Endothelial cell of umbilical vein (primary cell): ENCODE measurements at regions of chr3 and their contacts with region 1.

Region 1: GRCh38 chr3:197701841-197702240 is 34.9 kb downstream of the RUBCN start:
- DNase-seq: no peak
- H3K4me3 ChIP-seq: no peak overlapping the region
- H3K27ac ChIP-seq: no peak overlapping the region
- H3K4me1 ChIP-seq: no peaks in the 10 kb centered on the region
- H3K27me3 ChIP-seq: no peaks in the 10 kb centered on the region
- CTCF ChIP-seq: no peak
- POLR2A ChIP-seq: no peak

Region 2: GRCh38 chr3:196883361-196883760 is 818.5 kb before region 1 on chr3:
- CTCF ChIA-PET with region 1: no interaction called
- POLR2A ChIA-PET with region 1: no interaction called
- dilution Hi-C with region 1: no loop called
- intact Hi-C with region 1: no loop called
- DNase-seq: no peak
- H3K4me3 ChIP-seq: no peak overlapping the region
- H3K27ac ChIP-seq: no peak overlapping the region
- H3K4me1 ChIP-seq: no peaks in the 10 kb centered on the region
- H3K27me3 ChIP-seq: no peaks in the 10 kb centered on the region
- CTCF ChIP-seq: no peak
- POLR2A ChIP-seq: no peak

Region 3: DNA sequence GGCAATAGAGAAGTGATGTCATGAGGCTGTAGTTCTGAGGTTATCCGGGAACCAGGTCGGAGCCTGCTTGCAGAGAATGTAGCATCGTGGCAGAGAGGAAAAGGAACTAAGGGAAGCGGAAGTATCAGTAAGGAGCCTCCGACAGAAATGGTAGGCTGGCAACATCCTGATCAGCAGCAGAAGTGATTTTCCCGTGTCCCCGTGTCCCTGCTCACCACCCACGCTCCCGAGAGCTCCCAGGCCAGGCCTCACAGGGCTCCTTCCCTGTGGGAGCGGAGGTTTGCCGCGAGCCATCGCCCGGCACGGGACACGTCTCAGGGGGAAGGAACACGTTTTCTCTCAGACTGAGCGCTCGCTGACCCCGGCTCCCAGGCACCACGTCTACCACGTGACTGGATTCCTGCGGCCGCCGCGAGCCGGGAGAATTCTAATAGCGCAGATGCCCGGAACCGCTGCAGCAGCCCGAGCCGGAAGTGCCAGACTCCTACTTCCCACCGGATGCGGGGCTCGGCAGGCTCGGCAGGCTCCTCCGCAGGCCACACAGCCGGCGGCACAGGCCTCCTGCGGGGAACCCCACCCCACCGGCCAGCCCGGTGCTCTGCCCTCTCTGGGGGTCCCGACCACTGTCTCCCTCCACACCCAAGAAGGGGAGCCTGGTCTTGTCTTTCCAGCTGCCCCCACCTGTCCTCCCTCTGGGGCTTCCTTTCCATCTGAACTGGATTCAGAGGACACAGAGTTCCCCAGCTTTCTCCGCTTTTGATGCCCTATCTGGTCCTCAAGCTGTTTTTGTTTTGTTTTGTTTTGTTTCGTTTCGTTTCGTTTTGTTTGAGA is 245.4 kb before region 1 on chr3:
- CTCF ChIA-PET with region 1: no interaction called
- POLR2A ChIA-PET with region 1: no interaction called
- dilution Hi-C with region 1: no loop called
- intact Hi-C with region 1: no loop called
- DNase-seq: peak; percentile 77
- H3K4me3 ChIP-seq: peak overlapping the region in 2 of 3 experiments; percentile 12 to 35
- H3K27ac ChIP-seq: peak overlapping the region; percentile 47
- H3K4me1 ChIP-seq: peaks cover 11% of the 10 kb centered on the region
- H3K27me3 ChIP-seq: no peaks in the 10 kb centered on the region
- CTCF ChIP-seq: no peak
- POLR2A ChIP-seq: peak; percentile 89

Region 4: DNA sequence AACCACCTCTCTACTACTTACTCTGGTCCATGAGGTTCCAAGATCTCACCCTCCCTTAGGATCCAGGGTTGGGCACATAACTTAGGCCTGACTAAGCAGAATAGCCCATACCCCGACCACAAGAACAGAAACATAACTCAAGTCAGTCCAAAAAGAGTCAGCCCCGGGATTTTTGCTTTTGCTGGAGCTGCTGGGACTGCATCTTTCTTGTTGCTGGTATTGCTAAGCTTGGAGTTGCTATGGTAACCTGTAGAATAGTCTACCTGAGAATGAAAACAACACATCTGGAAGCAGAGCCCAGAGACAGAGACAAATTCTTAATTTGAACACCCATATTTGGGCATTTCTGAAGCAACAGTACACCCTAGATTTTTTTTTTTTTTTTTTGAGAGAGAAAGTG is 28.4 kb after region 1 on chr3:
- CTCF ChIA-PET with region 1: no interaction called
- POLR2A ChIA-PET with region 1: interaction called, 10 read pairs
- dilution Hi-C with region 1: no loop called
- intact Hi-C with region 1: no loop called
- DNase-seq: no peak
- H3K4me3 ChIP-seq: no peak overlapping the region
- H3K27ac ChIP-seq: no peak overlapping the region
- H3K4me1 ChIP-seq: no peaks in the 10 kb centered on the region
- H3K27me3 ChIP-seq: no peaks in the 10 kb centered on the region
- CTCF ChIP-seq: no peak
- POLR2A ChIP-seq: no peak

Region 5: DNA sequence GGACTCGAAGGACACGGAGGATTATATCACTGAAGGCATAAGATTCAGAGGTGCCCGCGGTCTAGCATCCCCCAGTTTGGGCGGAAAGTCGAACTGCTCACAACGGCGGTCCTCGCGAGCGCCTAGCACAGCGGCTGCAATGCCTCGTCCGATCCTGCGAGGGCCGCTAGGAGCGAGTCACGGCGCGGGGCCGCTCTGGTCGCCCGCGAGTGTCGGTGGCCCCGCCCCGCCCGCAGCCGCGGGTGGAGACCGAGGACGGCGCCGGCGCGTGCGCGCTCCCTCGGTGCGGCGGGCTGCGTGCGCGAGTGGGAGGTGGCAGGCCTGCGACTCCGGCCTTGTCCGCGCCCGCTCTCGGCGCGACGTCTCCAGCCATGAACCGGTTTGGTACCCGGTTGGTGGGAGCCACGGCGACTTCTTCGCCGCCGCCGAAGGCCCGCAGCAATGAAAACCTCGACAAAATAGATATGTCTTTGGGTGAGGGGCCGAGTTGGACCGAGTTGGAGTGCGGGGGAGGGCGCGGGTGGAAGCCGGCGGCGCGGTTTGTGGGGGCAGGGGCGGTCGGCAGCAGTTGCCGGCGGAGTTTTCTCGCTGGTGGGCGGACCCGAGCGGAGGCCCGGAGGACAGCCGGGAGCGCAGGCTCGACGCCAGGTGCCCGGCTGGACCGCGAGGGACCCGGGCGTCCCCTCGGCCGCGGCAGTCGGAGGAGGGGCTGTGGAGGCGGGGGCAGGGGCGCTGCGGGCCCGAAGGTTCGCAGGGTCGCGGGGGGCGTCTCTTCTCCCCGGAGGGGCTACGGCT is 48.0 kb after region 1 on chr3 and contains the start of gene FYTTD1:
- CTCF ChIA-PET with region 1: no interaction called
- POLR2A ChIA-PET with region 1: no interaction called
- dilution Hi-C with region 1: no loop called
- intact Hi-C with region 1: no loop called
- DNase-seq: peak; percentile 87
- H3K4me3 ChIP-seq: peak within 1 kb of the TSS; percentile 59 to 87 (median 62)
- H3K27ac ChIP-seq: peak within 1 kb of the TSS; percentile 35
- H3K4me1 ChIP-seq: peaks cover 13% of the 10 kb centered on the region
- H3K27me3 ChIP-seq: no peaks in the 10 kb centered on the region
- CTCF ChIP-seq: peak; percentile 18 to 45
- POLR2A ChIP-seq: peak; percentile 81
- total RNA-seq, gene FYTTD1: 52.3 and 59.3 TPM in 2 replicates